H1 (cell line): ENCODE measurements at regions of chr3 and their contacts with region 1.

Region 1: DNA sequence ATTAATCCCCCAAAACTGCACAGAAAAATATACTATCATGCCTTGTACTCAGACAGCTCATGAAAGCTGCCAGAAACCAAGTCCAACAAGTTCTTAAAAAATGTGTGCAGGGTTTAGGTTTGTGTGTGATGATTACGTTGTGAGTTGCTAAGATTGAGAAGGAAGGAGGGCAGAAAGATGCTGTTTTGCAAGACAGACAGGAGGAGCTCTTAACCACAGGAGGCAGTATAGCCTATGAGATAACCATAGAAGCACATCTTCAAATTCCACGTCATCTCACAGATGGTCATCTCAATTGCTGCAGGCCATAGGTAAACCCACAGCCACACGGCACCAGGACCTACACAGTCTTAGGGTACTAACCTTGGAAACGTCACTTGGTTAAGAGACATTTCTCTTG is 191.9 kb downstream of the STT3B start:
- DNase-seq: no peak
- H3K4me3 ChIP-seq: peak overlapping the region in 1 of 4 experiments; percentile 14; a peak in 1 of 8 replicates
- H3K27ac ChIP-seq: no peak overlapping the region
- H3K4me1 ChIP-seq: peaks cover 0 to 9% (median 2%) of the 10 kb centered on the region in 4 experiments; a peak in 3 of 7 replicates
- H3K27me3 ChIP-seq: no peaks in the 10 kb centered on the region
- CTCF ChIP-seq: peak in 2 of 3 experiments; percentile 12 to 61; a peak in 2 of 4 replicates
- EP300 ChIP-seq: no peak
- POLR2A ChIP-seq: no peak
- RAD21 ChIP-seq: peak; percentile 68 to 70

Region 2: DNA sequence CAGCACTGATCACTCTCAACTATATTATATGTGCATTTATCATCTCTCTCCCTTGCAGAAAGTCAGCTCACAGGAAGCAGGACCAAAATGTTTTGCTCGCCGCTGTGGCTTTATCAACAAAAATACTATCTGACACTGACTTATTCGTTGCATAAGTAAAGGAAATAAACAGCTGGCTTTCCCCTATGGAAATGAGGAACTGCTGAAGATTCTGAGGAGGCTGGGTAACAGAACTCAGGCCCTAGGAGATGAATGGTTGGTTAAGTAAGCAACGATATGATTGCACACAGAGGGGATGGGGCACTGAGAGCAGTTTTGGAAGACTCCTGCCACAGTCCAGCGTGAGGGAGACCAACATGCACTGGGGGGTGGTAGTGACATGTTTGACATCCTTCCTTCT is 10.8 kb before region 1 on chr3:
- CTCF ChIA-PET with region 1: interaction called, 12 read pairs
- POLR2A ChIA-PET with region 1: no interaction called
- DNase-seq: no peak
- H3K4me3 ChIP-seq: no peak overlapping the region
- H3K27ac ChIP-seq: no peak overlapping the region
- H3K4me1 ChIP-seq: no peaks in the 10 kb centered on the region
- H3K27me3 ChIP-seq: no peaks in the 10 kb centered on the region
- CTCF ChIP-seq: no peak
- EP300 ChIP-seq: no peak
- POLR2A ChIP-seq: no peak
- RAD21 ChIP-seq: no peak

Region 3: DNA sequence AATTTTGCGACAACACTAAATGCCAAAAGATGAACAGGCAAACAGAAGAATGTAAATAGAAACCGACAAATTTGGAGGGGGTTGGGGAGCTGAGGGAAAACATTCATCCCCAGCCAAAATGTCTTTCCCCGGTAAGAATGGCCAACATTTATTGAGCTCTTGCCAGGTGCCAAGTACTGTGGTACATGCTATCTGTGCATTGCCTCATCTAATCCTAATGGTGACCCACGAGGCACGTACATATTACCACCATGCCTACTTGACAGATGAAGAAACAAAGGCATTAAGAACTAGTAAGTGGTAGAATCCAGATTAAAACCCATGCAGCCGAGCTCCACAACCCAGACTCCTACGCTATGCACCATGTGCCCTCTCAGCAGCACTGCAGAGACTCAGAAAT is 13.8 kb after region 1 on chr3:
- CTCF ChIA-PET with region 1: interaction called, 19 read pairs
- POLR2A ChIA-PET with region 1: interaction called, 5 read pairs
- DNase-seq: no peak
- H3K4me3 ChIP-seq: no peak overlapping the region
- H3K27ac ChIP-seq: no peak overlapping the region
- H3K4me1 ChIP-seq: peaks cover 0 to 7% (median 3%) of the 10 kb centered on the region in 4 experiments; a peak in 3 of 7 replicates
- H3K27me3 ChIP-seq: no peaks in the 10 kb centered on the region
- CTCF ChIP-seq: no peak
- EP300 ChIP-seq: no peak
- POLR2A ChIP-seq: no peak
- RAD21 ChIP-seq: no peak